Activated CD4-positive, alpha-beta T cell treated with anti-CD3 and anti-CD28 coated beads for 36 hours (primary cell): ENCODE measurements at regions of chr3 and their contacts with region 1.

Region 1: DNA sequence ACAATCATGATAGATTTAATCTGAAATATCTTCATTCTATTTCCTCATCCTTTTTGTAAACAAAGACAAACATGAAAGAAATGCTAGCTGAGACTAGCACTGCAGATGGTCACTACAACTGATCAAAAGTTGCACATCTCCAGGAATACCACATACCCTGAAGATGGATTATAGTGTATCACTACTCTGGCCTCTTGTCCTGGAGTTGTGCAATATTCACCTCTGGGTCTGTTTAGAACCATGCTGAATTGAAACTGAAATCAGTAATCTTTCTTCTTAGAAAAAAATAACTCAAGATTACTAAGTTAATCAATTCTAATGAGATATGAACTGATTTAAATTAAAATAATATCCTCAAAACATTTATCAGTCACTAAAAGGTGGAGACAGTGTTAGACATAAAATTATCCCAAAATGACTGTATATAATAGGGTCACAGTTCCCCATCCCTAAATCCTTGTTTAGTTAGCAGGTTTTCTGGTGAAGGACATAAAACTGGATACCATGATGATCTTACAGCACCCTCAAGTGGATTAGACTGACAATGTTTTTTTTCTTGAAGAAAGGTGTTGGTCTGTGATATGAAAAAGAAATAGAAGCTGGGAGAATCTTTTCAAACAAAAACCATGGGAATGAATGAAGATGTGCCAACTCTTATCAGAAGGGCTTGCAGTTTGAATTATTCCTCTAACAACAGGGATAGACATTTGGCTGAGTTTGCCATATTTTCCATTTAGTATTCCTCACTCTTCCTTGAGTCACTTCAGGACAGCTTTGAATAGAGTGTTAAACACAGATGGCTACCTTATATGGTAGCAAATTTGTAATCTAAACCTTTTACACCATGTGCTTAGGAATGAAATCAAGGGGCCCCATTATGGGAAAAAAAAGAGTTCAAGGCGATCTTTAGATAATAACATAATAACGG is 7.1 kb upstream of the TTC14 start:
- DNase-seq: no peak
- ATAC-seq: no peak
- H3K4me3 Mint-ChIP-seq: no peak overlapping the region
- H3K27ac Mint-ChIP-seq: no peak overlapping the region
- H3K4me1 Mint-ChIP-seq: no peaks in the 10 kb centered on the region
- H3K27me3 Mint-ChIP-seq: peaks cover 25% of the 10 kb centered on the region

Region 2: GRCh38 chr3:179750720-179751328 is 844.1 kb before region 1 on chr3:
- CTCF ChIA-PET with region 1: no interaction called
- POLR2A ChIA-PET with region 1: no interaction called
- intact Hi-C with region 1: loop called in 1 of 2 experiments (anchors 10 kb)
- DNase-seq: peak; percentile 12
- ATAC-seq: no peak
- H3K4me3 Mint-ChIP-seq: no peak overlapping the region
- H3K27ac Mint-ChIP-seq: no peak overlapping the region
- H3K4me1 Mint-ChIP-seq: no peaks in the 10 kb centered on the region
- H3K27me3 Mint-ChIP-seq: no peaks in the 10 kb centered on the region

Region 3: DNA sequence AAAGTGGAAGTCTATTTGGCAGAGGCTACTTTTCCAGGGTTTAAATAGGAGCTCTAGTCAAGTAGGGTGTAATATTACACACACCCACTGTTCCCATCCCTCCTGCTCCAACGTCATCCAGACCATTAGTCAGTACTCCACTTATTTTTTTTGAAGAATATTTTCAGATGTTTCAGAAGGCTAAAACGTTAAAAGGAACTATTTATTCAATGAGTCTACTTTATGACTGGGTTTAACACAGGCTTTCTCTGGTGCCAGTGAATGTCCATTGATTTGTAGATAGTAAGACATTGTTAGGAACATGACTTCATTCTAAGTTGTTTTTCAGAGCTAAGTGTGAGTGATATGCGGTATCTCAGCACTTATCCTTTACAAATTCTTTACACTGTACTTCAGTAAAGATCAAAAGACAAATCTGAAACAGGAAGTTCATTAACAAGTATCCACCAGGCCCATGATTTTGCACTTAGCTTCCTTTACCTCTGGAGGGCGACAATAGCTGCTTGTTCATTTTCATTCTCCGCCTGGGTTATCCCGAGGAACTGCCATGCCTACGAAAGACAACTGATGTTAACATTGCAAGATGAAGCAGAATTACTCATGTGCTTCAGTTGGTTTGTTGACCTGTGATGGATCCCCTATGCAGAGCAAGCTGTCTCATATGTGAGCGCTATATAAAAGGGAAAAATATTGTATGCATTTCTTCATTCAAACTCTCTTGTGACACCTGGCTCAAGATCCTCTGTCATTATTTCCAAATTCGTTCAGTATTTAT is 783.4 kb before region 1 on chr3:
- CTCF ChIA-PET with region 1: no interaction called
- POLR2A ChIA-PET with region 1: no interaction called
- intact Hi-C with region 1: loop called in 1 of 2 experiments (anchors 10 kb)
- DNase-seq: peak; percentile 30
- ATAC-seq: peak; percentile 73
- H3K4me3 Mint-ChIP-seq: no peak overlapping the region
- H3K27ac Mint-ChIP-seq: no peak overlapping the region
- H3K4me1 Mint-ChIP-seq: no peaks in the 10 kb centered on the region
- H3K27me3 Mint-ChIP-seq: no peaks in the 10 kb centered on the region

Region 4: DNA sequence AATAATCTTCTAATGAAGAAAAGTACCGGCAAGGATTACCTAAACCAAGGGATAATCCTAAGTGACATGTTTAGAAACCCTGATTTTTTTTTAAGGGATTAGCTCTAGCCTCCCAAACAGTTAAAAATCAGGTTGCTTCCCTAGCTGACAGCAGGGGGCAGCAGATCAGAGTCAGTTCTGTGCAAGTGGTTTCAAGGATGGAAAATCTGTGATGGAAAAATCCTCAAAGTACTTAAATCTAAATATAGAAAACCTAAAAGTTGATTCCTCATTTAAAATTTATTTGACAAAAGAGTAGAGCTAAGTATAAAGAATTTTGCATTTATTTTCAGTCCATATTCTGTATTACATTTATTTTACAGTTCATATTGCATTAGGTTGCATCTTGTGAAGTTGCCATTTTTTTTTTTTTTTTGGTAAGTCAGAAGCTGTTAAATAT is 665.8 kb before region 1 on chr3:
- CTCF ChIA-PET with region 1: interaction called, 5 read pairs
- POLR2A ChIA-PET with region 1: no interaction called
- intact Hi-C with region 1: loop called (anchors 1 to 10 kb)
- DNase-seq: peak; percentile 73
- ATAC-seq: peak; percentile 44
- H3K4me3 Mint-ChIP-seq: no peak overlapping the region
- H3K27ac Mint-ChIP-seq: no peak overlapping the region
- H3K4me1 Mint-ChIP-seq: no peaks in the 10 kb centered on the region
- H3K27me3 Mint-ChIP-seq: peaks cover 3% of the 10 kb centered on the region

Region 5: GRCh38 chr3:180073561-180073960 is 521.3 kb before region 1 on chr3:
- CTCF ChIA-PET with region 1: no interaction called
- POLR2A ChIA-PET with region 1: no interaction called
- intact Hi-C with region 1: no loop called
- DNase-seq: no peak
- ATAC-seq: no peak
- H3K4me3 Mint-ChIP-seq: no peak overlapping the region
- H3K27ac Mint-ChIP-seq: no peak overlapping the region
- H3K4me1 Mint-ChIP-seq: no peaks in the 10 kb centered on the region
- H3K27me3 Mint-ChIP-seq: no peaks in the 10 kb centered on the region

Region 6: GRCh38 chr3:180531303-180532278 is 63.3 kb before region 1 on chr3:
- CTCF ChIA-PET with region 1: no interaction called
- POLR2A ChIA-PET with region 1: no interaction called
- intact Hi-C with region 1: no loop called
- DNase-seq: no peak
- ATAC-seq: no peak
- H3K4me3 Mint-ChIP-seq: no peak overlapping the region
- H3K27ac Mint-ChIP-seq: no peak overlapping the region
- H3K4me1 Mint-ChIP-seq: no peaks in the 10 kb centered on the region
- H3K27me3 Mint-ChIP-seq: no peaks in the 10 kb centered on the region